ENCODE measurements at regions of chr15 and their contacts with region 1.

Region 1: DNA sequence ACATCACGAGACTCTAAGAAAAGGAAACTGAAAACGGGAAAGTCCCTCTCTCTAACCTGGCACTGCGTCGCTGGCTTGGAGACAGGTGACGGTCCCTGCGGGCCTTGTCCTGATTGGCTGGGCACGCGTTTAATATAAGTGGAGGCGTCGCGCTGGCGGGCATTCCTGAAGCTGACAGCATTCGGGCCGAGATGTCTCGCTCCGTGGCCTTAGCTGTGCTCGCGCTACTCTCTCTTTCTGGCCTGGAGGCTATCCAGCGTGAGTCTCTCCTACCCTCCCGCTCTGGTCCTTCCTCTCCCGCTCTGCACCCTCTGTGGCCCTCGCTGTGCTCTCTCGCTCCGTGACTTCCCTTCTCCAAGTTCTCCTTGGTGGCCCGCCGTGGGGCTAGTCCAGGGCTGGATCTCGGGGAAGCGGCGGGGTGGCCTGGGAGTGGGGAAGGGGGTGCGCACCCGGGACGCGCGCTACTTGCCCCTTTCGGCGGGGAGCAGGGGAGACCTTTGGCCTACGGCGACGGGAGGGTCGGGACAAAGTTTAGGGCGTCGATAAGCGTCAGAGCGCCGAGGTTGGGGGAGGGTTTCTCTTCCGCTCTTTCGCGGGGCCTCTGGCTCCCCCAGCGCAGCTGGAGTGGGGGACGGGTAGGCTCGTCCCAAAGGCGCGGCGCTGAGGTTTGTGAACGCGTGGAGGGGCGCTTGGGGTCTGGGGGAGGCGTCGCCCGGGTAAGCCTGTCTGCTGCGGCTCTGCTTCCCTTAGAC is at the start of gene B2M:
- DNase-seq: peak; percentile 98
- H3K4me3 ChIP-seq: peak within 1 kb of the TSS; percentile 74
- H3K27ac ChIP-seq: peak within 1 kb of the TSS; percentile 99
- H3K4me1 ChIP-seq: peaks cover 11% of the 10 kb centered on the region
- H3K27me3 ChIP-seq: no peaks in the 10 kb centered on the region
- CTCF ChIP-seq: no peak
- total RNA-seq, gene B2M: 1,783 to 5,339 TPM

Region 2: GRCh38 chr15:43791993-43792760 is 919.4 kb before region 1 on chr15 and contains the start of gene SERF2:
- intact Hi-C with region 1: loop called (anchors 10 kb)
- DNase-seq: peak; percentile 100
- H3K4me3 ChIP-seq: peak within 1 kb of the TSS; percentile 87
- H3K27ac ChIP-seq: peak within 1 kb of the TSS; percentile 93
- H3K4me1 ChIP-seq: peaks cover 14% of the 10 kb centered on the region
- H3K27me3 ChIP-seq: no peaks in the 10 kb centered on the region
- CTCF ChIP-seq: no peak
- total RNA-seq, gene SERF2: 1,223 to 1,445 TPM

Region 3: GRCh38 chr15:44435893-44436667 is 275.5 kb before region 1 on chr15:
- intact Hi-C with region 1: no loop called
- DNase-seq: no peak
- H3K4me3 ChIP-seq: no peak overlapping the region
- H3K27ac ChIP-seq: no peak overlapping the region
- H3K4me1 ChIP-seq: peaks cover 4% of the 10 kb centered on the region
- H3K27me3 ChIP-seq: no peaks in the 10 kb centered on the region
- CTCF ChIP-seq: no peak

Region 4: GRCh38 chr15:44573386-44573785 is 138.1 kb before region 1 on chr15:
- intact Hi-C with region 1: no loop called
- DNase-seq: no peak
- H3K4me3 ChIP-seq: no peak overlapping the region
- H3K27ac ChIP-seq: no peak overlapping the region
- H3K4me1 ChIP-seq: no peaks in the 10 kb centered on the region
- H3K27me3 ChIP-seq: no peaks in the 10 kb centered on the region
- CTCF ChIP-seq: no peak

Region 5: DNA sequence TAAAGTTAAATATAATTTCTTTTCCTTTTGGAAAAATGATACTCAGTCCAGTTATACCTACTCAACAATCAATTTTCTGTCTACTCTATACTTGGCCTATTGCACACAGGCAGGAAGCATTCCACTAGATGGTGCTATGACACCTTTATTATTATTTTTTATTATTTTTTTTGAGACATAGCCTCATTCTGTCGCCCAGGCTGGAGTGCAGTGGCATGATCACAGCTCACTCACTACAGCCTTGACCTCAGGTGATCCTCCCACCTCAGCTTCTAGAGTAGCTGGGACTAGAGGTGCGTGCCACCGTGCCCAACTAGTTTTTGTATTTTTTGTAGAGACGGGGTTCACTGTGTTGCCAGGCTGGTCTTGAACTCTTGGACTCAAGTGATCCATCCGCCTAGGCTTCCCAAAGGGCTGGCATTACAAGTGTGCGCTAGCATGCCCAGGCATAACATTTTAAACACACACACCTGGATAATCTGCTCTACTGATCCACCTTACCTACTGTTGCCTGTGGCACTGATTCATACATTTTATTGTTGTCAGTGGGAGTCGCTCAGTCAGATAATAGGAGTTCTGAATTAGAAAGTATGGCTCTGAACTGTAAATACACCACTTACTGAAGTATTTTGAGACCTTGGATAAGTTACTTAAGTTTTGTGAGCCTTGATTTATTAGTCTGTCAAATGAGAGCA is 118.3 kb before region 1 on chr15:
- intact Hi-C with region 1: no loop called
- DNase-seq: no peak
- H3K4me3 ChIP-seq: no peak overlapping the region
- H3K27ac ChIP-seq: no peak overlapping the region
- H3K4me1 ChIP-seq: no peaks in the 10 kb centered on the region
- H3K27me3 ChIP-seq: no peaks in the 10 kb centered on the region
- CTCF ChIP-seq: peak; percentile 28

Region 6: GRCh38 chr15:44728576-44729407 is 17.3 kb after region 1 on chr15:
- intact Hi-C with region 1: loop called (anchors 1 kb)
- DNase-seq: peak; percentile 97
- H3K4me3 ChIP-seq: peak overlapping the region; percentile 42
- H3K27ac ChIP-seq: peak overlapping the region; percentile 95
- H3K4me1 ChIP-seq: peaks cover 20% of the 10 kb centered on the region
- H3K27me3 ChIP-seq: no peaks in the 10 kb centered on the region
- CTCF ChIP-seq: no peak